Activated T-helper 1 cell treated with anti-CD3 and anti-CD28 coated beads, Interleukin-12 subunit alpha, Interleukin-12 subunit beta, Interleukin-2, Interleukin-4 antibody, amounts not matched to agents 30 ng/mL and 10 ng/mL and 1 ng/mL, durations not matched to agents 14 hours and 24 hours and 36 hours (primary cell): ENCODE measurements at regions of chr22 and their contacts with region 1.

Region 1: GRCh38 chr22:23984430-23984829 is 4.5 kb downstream of the GSTT2 start:
- DNase-seq: peak; percentile 43
- H3K4me3 Mint-ChIP-seq: no peak overlapping the region
- H3K27ac Mint-ChIP-seq: no peak overlapping the region
- H3K4me1 Mint-ChIP-seq: peaks cover 11% of the 10 kb centered on the region
- H3K27me3 Mint-ChIP-seq: peaks cover 3% of the 10 kb centered on the region

Region 2: GRCh38 chr22:24230911-24231656 is 246.7 kb after region 1 on chr22:
- intact Hi-C with region 1: loop called (anchors 5 kb)
- DNase-seq: peak; percentile 41
- H3K4me3 Mint-ChIP-seq: no peak overlapping the region
- H3K27ac Mint-ChIP-seq: no peak overlapping the region
- H3K4me1 Mint-ChIP-seq: no peaks in the 10 kb centered on the region
- H3K27me3 Mint-ChIP-seq: no peaks in the 10 kb centered on the region